ENCODE measurements at regions of chr1 and their contacts with region 1.

Region 1: DNA sequence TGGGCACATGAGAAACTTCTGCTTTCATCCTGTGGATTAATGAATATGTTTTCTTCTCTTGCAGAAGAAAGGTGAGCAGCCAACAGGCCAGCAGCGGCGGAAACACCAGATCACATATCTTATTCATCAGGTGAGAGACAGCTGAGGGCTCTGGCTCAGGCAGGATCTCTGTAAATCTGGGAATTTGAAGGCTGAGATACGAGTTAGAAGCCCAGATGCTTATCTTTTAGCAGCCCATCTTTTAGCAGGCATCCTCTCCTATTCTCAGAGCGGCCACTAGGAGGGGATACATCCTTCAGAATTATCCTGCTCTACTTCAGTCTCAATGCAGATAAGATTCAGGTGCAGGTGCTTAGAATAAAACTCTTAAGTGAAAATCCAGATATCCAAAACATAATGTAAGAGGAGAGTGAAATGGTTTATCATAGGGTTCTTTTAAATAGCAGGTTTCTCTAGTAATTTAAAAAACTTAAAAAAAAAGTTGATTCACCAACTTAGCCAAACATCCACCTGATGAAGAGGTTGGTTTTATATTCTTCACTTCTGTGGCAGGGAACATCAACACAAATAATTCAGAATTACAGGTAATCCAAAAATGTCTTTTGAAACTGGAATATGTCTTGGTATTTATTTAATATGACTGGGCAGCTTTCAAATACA is 19.3 kb downstream of the SH2D2A start:
- DNase-seq: peak; percentile 75
- ATAC-seq: peak; percentile 84
- H3K4me3 Mint-ChIP-seq: no peak overlapping the region
- H3K27ac Mint-ChIP-seq: no peak overlapping the region
- H3K4me1 Mint-ChIP-seq: peaks cover 7% of the 10 kb centered on the region
- H3K27me3 Mint-ChIP-seq: no peaks in the 10 kb centered on the region

Region 2: DNA sequence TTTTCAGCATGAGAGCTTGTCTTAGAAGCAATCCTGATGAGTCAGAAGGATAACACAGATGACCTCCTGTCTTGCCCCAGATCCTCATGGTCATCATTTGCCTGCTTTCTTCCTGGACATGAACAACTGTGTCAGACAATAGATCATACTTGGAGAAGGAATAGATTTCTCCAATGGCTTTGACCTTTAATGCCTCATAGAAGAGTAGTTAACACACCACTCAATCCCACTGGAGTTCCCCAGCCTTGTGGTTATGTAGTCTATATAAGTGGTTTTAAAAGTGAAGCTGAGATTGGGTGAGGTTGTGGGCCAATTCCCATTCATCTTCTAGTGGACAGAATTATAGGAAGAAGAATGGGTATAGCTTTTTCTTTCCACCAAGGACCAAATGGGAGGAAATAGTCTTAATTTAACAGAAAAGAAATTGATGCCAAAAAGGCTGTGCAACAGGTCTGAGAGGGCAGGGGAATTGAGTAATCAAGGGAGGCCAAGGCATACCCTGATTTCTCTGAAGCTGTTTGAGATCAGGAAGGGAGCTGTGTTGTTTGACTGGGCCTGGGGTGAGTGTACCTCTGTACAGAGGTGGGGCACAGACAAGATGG is 15.7 kb before region 1 on chr1:
- CTCF ChIA-PET with region 1: interaction called, 10 read pairs
- POLR2A ChIA-PET with region 1: no interaction called
- intact Hi-C with region 1: no loop called
- DNase-seq: no peak
- ATAC-seq: peak; percentile 61
- H3K4me3 Mint-ChIP-seq: no peak overlapping the region
- H3K27ac Mint-ChIP-seq: no peak overlapping the region
- H3K4me1 Mint-ChIP-seq: peaks cover 27% of the 10 kb centered on the region
- H3K27me3 Mint-ChIP-seq: no peaks in the 10 kb centered on the region

Region 3: GRCh38 chr1:156860113-156860627 is 62.8 kb after region 1 on chr1:
- CTCF ChIA-PET with region 1: interaction called, 109 read pairs
- POLR2A ChIA-PET with region 1: interaction called, 3 read pairs
- intact Hi-C with region 1: loop called (anchors 1 kb)
- DNase-seq: peak; percentile 77
- ATAC-seq: peak; percentile 47
- H3K4me3 Mint-ChIP-seq: peak overlapping the region; percentile 56
- H3K27ac Mint-ChIP-seq: no peak overlapping the region
- H3K4me1 Mint-ChIP-seq: peaks cover 25% of the 10 kb centered on the region
- H3K27me3 Mint-ChIP-seq: peaks cover 45% of the 10 kb centered on the region

Region 4: DNA sequence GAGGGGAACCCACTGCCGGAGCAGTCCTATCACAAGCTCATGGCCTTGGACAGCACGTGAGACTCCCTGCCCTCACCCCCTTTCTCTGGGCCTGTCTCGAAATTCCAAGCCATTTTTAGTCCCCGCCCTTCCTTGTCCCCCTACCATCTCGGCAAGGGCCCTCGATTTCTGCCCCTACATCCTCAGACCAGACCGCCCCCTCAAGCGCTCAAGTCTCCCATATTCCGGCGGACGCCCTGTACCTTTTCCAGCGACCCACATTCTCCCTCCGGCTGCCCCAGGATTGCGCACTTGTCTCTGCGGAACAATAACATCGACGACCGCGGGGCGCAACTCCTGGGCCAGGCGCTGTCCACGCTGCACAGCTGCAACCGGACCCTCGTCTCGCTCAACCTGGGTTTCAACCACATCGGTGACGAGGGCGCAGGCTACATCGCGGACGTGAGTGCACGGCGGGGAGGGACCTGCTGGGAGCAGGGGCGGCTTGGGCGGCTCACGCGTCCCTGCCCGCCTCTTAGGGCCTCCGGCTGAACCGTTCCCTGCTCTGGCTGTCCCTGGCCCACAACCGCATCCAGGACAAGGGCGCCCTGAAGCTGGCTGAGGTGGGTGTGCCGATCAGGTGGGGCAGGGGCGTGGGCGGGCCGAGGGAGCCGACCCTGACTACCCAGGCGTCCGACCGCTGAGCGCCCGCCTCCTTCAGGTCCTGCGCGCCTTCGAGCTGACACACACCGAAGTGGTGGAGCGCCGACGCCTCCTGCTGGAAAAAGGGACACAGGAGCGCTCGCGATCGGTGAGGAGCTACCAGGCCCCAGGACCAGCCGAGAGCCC is 130.1 kb after region 1 on chr1:
- CTCF ChIA-PET with region 1: interaction called, 4 read pairs
- POLR2A ChIA-PET with region 1: no interaction called
- intact Hi-C with region 1: loop called in 1 of 2 experiments (anchors 2 kb)
- DNase-seq: peak; percentile 87
- ATAC-seq: peak; percentile 76
- H3K4me3 Mint-ChIP-seq: no peak overlapping the region
- H3K27ac Mint-ChIP-seq: no peak overlapping the region
- H3K4me1 Mint-ChIP-seq: peaks cover 25% of the 10 kb centered on the region
- H3K27me3 Mint-ChIP-seq: peaks cover 64% of the 10 kb centered on the region

Measured in activated CD4-positive, alpha-beta T cell treated with anti-CD3 and anti-CD28 coated beads for 36 hours (primary cell).